ENCODE measurements at regions of chr7 and their contacts with region 1.

Region 1: DNA sequence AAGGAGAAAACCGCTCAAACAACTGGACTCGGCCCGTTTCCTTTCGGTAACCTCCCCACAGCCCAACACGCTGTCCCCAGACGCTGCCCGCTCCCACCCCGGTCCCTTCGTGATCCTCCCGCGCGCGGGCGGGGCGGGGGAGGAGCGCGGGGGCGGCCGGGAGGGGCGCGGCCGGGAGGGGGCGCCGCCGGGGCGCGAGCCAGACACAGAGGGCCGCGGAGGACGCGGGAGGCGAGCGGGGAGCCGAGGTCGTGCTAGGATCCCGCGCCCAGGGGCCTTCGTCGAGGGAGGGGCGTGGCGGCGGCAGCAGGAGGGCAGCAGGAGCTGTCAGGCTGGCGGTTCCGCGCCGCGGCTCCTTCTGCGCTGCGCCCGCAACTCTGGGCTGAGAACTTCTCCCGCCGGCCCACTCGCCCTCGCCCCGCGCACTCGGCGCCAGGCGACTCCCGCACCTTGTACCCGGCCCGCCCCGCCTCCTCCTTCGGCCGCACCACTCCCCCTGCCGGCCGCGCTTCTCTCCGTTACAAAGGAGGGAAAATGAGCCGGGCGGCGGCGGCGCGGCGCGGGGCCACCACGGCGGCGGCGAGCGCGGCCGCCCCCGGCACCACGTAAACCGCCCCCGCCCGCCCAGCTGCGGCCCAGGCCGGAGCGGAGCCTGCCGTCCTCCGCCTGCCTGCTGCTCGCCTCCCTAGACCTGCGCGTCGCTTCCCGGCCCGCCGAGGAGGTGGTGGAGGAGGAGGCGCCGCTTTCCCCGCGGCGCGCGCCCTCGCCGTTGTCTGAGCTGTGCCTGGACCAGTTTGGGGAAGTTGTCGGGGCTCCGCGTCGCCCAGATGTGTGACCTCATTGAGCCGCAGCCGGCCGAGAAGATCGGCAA is at the start of gene CDK14:
- DNase-seq: peak; percentile 64
- H3K4me3 Mint-ChIP-seq: peak within 1 kb of the TSS; percentile 77
- H3K27ac Mint-ChIP-seq: no peak within 1 kb of the TSS
- H3K4me1 Mint-ChIP-seq: peaks cover 18% of the 10 kb centered on the region
- H3K27me3 Mint-ChIP-seq: peaks cover 56% of the 10 kb centered on the region
- total RNA-seq, gene CDK14: 0.42 to 0.81 TPM

Region 2: DNA sequence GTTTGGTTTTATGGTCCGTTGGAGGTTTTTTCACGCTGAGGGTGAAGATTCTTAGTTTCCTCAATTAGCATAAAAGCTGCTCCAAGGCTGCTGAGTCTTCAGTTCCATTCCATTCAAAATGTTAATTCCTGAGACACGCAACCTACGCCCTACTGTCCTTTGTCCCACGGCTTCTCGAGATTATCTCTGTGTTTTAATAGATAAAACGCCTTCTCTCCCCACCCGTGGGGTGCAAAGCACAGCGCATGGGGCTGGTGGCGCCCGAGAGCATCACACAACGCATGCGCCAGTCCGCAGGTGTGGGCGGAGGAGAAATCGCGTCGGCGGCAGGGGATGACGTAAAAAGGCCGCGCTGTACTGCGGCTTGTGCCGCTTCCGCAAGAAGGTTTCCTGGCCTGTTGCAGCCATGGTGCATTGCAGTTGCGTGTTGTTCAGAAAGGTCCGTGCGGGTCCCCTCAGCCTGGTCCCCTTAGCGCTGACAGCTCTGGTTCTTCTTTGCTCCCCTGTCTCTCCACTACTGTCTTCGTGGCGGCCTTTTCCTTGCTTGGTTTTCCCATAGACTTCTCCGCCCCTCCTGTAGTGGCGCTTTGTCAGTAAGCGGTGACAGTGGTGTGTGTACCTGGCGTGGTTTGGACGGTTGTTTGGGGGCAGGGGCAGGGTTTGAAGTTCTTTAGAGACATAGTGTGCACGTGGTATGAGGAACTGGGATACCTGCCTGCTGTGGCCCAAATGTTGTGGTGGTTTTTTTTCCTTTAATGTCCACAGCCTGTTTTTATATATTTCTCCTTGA is 249.5 kb before region 1 on chr7 and contains the start of gene GTPBP10:
- CTCF ChIA-PET with region 1: no interaction called
- intact Hi-C with region 1: loop called (anchors 2 kb)
- DNase-seq: peak; percentile 96
- H3K4me3 Mint-ChIP-seq: peak within 1 kb of the TSS; percentile 94
- H3K27ac Mint-ChIP-seq: peak within 1 kb of the TSS; percentile 96
- H3K4me1 Mint-ChIP-seq: peaks cover 34% of the 10 kb centered on the region
- H3K27me3 Mint-ChIP-seq: no peaks in the 10 kb centered on the region
- total RNA-seq, gene GTPBP10: 35.8 to 39.3 TPM

Region 3: GRCh38 chr7:90474284-90475210 is 121.5 kb before region 1 on chr7:
- CTCF ChIA-PET with region 1: no interaction called
- intact Hi-C with region 1: no loop called
- DNase-seq: no peak
- H3K4me3 Mint-ChIP-seq: no peak overlapping the region
- H3K27ac Mint-ChIP-seq: no peak overlapping the region
- H3K4me1 Mint-ChIP-seq: peaks cover 2% of the 10 kb centered on the region
- H3K27me3 Mint-ChIP-seq: peaks cover 14% of the 10 kb centered on the region

Region 4: GRCh38 chr7:90530263-90530662 is 65.8 kb before region 1 on chr7:
- CTCF ChIA-PET with region 1: no interaction called
- intact Hi-C with region 1: no loop called
- DNase-seq: no peak
- H3K4me3 Mint-ChIP-seq: no peak overlapping the region
- H3K27ac Mint-ChIP-seq: no peak overlapping the region
- H3K4me1 Mint-ChIP-seq: no peaks in the 10 kb centered on the region
- H3K27me3 Mint-ChIP-seq: peaks cover 7% of the 10 kb centered on the region

Region 5: GRCh38 chr7:90613088-90613498 is 17.1 kb after region 1 on chr7:
- CTCF ChIA-PET with region 1: no interaction called
- intact Hi-C with region 1: loop called (anchors 1 kb)
- DNase-seq: peak; percentile 50
- H3K4me3 Mint-ChIP-seq: no peak overlapping the region
- H3K27ac Mint-ChIP-seq: peak overlapping the region; percentile 70
- H3K4me1 Mint-ChIP-seq: peaks cover 18% of the 10 kb centered on the region
- H3K27me3 Mint-ChIP-seq: peaks cover 14% of the 10 kb centered on the region

Region 6: DNA sequence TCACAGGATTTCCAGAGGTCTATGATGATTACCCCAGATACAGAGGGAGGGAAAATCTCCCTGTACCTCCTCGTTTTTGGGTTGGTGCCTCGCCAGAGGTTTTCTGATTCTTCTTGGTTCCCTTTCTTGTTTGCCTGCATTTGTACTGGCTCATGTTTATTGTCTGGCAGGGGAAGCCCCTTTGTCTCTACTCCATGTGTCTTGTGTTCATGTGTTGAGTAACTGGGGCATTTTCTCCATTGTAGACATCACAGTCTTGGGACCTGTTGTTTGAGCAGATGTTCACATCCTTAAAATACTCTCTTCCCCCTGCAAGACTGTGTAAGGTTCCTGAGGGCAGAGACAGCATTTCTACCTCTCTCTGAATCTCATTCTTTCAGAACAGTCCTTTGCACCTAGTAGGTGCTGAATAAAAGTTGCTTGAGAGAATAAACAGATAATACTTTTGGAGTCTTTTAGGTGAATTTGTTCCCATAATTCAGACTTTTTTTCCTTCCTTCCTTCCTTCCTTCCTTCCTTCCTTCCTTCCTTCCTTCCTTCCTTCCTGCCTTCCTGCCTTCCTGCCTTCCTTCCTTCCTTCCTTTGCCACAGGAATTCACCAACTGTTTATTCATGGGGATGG is 25.2 kb after region 1 on chr7:
- CTCF ChIA-PET with region 1: interaction called, 6 read pairs
- intact Hi-C with region 1: loop called (anchors 1 kb)
- DNase-seq: no peak
- H3K4me3 Mint-ChIP-seq: no peak overlapping the region
- H3K27ac Mint-ChIP-seq: no peak overlapping the region
- H3K4me1 Mint-ChIP-seq: peaks cover 10% of the 10 kb centered on the region
- H3K27me3 Mint-ChIP-seq: peaks cover 2% of the 10 kb centered on the region

Region 7: DNA sequence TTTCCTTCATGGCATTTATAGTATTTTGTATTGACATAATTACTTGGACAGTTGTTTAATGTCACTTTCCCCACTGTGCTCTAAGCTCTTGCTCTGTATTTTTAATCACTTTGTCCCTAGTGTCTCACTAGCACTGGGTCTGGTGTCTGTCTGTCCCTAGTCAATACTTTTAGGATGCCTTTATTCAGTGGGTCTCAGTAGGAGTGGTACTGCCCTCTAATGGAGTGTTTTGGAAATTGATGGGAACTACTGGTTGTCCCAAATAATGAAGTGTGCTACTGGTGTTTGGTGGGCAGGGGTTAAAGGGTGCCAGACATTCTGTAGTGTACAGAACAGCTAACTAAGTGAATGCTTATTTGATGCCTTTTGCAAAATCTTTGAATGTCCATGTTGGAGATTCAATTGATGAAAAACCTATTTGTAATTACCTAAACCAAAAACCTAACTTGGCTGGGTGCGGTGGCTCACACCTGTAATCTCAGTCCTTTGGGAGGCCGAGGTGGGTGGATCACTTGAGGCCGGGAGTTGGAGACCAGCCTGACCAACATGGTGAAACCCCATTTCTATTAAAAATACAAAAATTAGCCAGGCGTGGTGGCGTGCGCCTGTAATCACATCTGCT is 33.4 kb after region 1 on chr7:
- CTCF ChIA-PET with region 1: interaction called, 10 read pairs
- intact Hi-C with region 1: no loop called
- DNase-seq: peak; percentile 12
- H3K4me3 Mint-ChIP-seq: no peak overlapping the region
- H3K27ac Mint-ChIP-seq: no peak overlapping the region
- H3K4me1 Mint-ChIP-seq: no peaks in the 10 kb centered on the region
- H3K27me3 Mint-ChIP-seq: peaks cover 4% of the 10 kb centered on the region

Region 8: GRCh38 chr7:90645784-90646183 is 49.7 kb after region 1 on chr7:
- CTCF ChIA-PET with region 1: no interaction called
- intact Hi-C with region 1: no loop called
- DNase-seq: no peak
- H3K4me3 Mint-ChIP-seq: no peak overlapping the region
- H3K27ac Mint-ChIP-seq: no peak overlapping the region
- H3K4me1 Mint-ChIP-seq: no peaks in the 10 kb centered on the region
- H3K27me3 Mint-ChIP-seq: peaks cover 3% of the 10 kb centered on the region

Region 9: DNA sequence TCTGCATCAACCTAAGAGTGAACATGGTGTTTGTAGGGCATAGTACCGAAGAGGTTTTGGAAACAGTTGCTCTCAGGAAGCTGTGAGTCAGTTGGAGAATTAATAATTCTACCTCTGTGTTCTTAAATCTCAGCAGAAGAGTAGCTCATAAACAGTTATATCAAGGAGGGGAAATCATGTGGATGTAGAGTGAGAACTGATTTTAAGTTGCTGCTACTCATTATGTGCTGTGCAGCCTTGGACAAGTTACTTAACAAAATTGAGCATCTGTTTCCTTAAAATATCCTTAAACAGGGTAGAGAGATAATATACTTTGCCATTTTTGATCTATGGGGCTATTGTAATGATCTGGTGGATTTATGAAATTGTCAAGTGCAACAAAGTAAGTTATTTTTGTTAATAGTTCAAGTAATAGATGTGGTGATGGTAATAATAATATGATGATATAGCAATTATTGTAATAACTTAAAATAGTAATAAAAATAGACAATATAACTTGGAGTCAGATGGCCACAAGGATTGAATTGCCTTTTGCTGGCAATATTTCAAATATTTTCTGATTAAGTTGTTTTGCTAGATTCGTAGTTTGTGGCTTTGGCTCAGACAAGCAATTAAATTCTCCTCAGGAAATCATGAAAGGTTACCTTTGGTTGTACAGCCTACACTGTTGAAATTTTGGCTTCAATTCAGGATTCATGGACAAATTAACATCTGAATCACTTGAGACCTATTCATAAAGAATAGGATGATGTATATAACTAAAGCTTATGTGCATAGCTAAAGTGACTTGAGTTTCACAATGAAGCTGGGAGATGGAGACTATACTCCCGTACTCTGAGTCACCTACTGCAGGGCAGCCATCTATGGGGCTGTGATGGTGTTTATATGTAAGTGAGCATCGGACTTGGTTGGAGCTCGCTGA is 228.6 kb after region 1 on chr7:
- CTCF ChIA-PET with region 1: no interaction called
- intact Hi-C with region 1: no loop called
- DNase-seq: no peak
- H3K4me3 Mint-ChIP-seq: no peak overlapping the region
- H3K27ac Mint-ChIP-seq: no peak overlapping the region
- H3K4me1 Mint-ChIP-seq: no peaks in the 10 kb centered on the region
- H3K27me3 Mint-ChIP-seq: no peaks in the 10 kb centered on the region

Measured in activated naive CD4-positive, alpha-beta T cell treated with anti-CD3 and anti-CD28 coated beads for 36 hours (primary cell).